Esophagus muscularis mucosa (tissue), 4 donors: ENCODE measurements at regions of chr9 and their contacts with region 1.

Region 1: GRCh38 chr9:37040508-37041127 is 6.5 kb upstream of the PAX5 start:
- DNase-seq: no peak
- H3K4me3 ChIP-seq: no peak overlapping the region
- H3K27ac ChIP-seq: no peak overlapping the region
- H3K4me1 ChIP-seq: peaks cover 27 to 29% (median 28%) of the 10 kb centered on the region in 4 donors
- H3K27me3 ChIP-seq: peaks cover 3 to 99% (median 44%) of the 10 kb centered on the region in 4 donors
- CTCF ChIP-seq: no peak
- EP300 ChIP-seq: no peak
- POLR2A ChIP-seq: no peak

Region 2: GRCh38 chr9:36980148-36980974 is 60.3 kb before region 1 on chr9:
- intact Hi-C with region 1: loop called (anchors 10 kb)
- DNase-seq: no peak
- H3K4me3 ChIP-seq: no peak overlapping the region
- H3K27ac ChIP-seq: no peak overlapping the region
- H3K4me1 ChIP-seq: no peaks in the 10 kb centered on the region
- H3K27me3 ChIP-seq: peaks cover 0 to 91% (median 14%) of the 10 kb centered on the region in 4 donors
- CTCF ChIP-seq: no peak
- EP300 ChIP-seq: no peak
- POLR2A ChIP-seq: no peak